Endothelial cell of umbilical vein (primary cell): ENCODE measurements at regions of chr5 and their contacts with region 1.

Region 1: DNA sequence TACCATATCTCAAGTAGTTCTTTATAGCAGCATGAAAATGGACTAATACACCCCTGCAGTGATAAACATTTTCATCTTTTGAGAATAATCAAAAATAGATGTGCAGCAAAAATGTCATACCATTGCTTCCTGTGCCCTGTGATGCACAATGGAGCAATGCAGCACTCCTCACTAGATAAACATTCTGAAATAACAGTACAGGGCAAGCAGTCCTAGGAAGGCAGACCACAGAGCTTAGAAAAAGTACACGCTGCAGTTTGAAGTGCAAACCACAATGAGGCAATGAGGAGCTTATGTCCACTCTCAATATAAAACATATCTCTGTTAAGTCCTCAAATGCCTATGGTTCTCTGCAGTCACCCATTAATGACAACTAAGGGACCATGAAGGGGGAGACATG is 367.6 kb downstream of the PDE4D start:
- DNase-seq: peak; percentile 63
- H3K4me3 ChIP-seq: no peak overlapping the region
- H3K27ac ChIP-seq: peak overlapping the region; percentile 88
- H3K4me1 ChIP-seq: peaks cover 33% of the 10 kb centered on the region
- H3K27me3 ChIP-seq: no peaks in the 10 kb centered on the region
- CTCF ChIP-seq: peak in 1 of 2 donors; percentile 7
- POLR2A ChIP-seq: no peak

Region 2: GRCh38 chr5:59542851-59543820 is 17.2 kb after region 1 on chr5:
- CTCF ChIA-PET with region 1: interaction called, 13 read pairs
- POLR2A ChIA-PET with region 1: no interaction called
- dilution Hi-C with region 1: no loop called
- intact Hi-C with region 1: no loop called
- DNase-seq: peak; percentile 95
- H3K4me3 ChIP-seq: no peak overlapping the region
- H3K27ac ChIP-seq: no peak overlapping the region
- H3K4me1 ChIP-seq: no peaks in the 10 kb centered on the region
- H3K27me3 ChIP-seq: no peaks in the 10 kb centered on the region
- CTCF ChIP-seq: no peak
- POLR2A ChIP-seq: no peak